ENCODE measurements at regions of chr19 and their contacts with region 1.

Region 1: GRCh38 chr19:17475541-17476115 is 5.3 kb downstream of the SLC27A1 start:
- DNase-seq: peak; percentile 65 to 83
- ATAC-seq: peak; percentile 94
- H3K4me3 ChIP-seq: peak overlapping the region in 3 of 4 donors; percentile 10 to 15 (median 10)
- H3K27ac ChIP-seq: peak overlapping the region; percentile 92 to 100 (median 96)
- H3K4me1 ChIP-seq: peaks cover 31 to 32% of the 10 kb centered on the region in 2 donors
- H3K27me3 ChIP-seq: no peaks in the 10 kb centered on the region
- CTCF ChIP-seq: no peak
- POLR2A ChIP-seq: peak; percentile 29 to 43

Region 2: DNA sequence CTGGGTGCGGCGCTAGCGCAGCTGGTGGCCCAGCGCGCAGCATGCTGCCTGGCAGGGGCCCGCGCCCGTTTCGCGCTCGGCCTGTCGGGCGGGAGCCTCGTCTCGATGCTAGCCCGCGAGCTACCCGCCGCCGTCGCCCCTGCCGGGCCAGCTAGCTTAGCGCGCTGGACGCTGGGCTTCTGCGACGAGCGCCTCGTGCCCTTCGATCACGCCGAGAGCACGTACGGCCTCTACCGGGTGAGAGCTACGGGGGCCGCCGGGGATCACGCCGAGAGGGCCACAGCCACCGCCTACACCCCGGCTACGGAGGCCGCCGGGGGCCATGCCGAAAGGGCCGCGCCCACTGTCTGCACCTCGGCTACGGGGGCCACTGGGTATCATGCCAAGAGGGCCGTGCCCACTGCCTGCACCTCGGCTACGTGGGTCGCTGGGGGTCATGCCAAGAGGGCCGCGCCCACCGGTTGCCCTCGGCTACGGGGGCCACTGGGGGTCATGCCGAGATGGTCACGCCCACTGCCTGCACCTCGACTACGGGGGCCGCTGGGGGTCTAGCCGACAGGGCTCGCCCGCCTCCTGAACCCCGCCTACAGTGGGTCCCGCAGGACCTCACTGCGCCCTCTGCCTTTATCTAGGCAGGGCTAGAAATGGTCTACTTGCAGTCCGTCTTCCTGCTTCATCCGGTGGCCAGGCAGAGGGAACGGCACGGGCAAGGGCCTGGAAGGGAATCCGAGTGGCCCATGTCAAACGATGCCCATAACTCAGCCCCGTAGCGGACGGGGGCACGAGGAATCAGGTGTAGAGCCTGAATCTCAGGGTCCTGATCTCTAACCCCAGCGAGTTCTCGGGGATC is 36.3 kb after region 1 on chr19:
- in situ Hi-C with region 1: no loop called
- intact Hi-C with region 1: loop called (anchors 2 kb)
- DNase-seq: peak; percentile 80 to 86
- ATAC-seq: peak; percentile 68 to 72
- H3K4me3 ChIP-seq: peak overlapping the region; percentile 75 to 100 (median 84)
- H3K27ac ChIP-seq: peak overlapping the region; percentile 90 to 100 (median 96)
- H3K4me1 ChIP-seq: peaks cover 22 to 27% of the 10 kb centered on the region in 2 donors
- H3K27me3 ChIP-seq: no peaks in the 10 kb centered on the region
- CTCF ChIP-seq: peak in 3 of 5 experiments; percentile 33 to 78 (median 72)
- POLR2A ChIP-seq: peak; percentile 76 to 82

Region 3: DNA sequence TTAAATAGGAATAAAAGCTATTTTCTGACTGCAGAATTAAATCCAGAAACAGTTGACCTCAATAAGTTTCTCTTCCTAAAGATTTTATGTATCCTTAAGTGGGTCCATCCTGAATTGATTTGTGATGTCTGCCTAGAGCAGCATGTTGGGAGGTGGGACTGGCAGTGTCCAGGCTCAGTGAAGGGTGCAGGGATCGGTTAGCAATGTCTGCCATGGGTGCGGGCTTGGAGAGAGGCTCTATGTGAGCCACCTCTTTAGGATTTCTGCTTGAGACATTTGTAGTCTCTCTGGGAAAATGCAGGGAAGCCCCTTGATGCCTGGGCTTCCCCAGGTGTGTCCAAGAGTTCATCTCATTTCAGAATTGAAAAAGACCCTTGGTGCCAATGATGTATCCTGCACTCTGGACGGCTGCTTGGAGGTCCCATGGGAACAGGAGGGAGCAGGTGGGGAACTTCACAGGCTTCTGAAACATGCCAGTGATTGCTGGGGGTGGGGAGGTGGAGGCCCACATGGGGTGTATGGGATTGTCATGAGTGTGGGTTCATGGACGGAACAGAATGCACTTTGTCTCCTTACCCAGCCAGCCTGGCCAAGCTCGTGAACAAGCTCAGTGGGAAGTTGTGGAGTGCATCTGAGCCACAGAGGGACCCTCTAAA is 73.6 kb after region 1 on chr19:
- in situ Hi-C with region 1: no loop called
- intact Hi-C with region 1: no loop called
- DNase-seq: no peak
- ATAC-seq: no peak
- H3K4me3 ChIP-seq: no peak overlapping the region
- H3K27ac ChIP-seq: no peak overlapping the region
- H3K4me1 ChIP-seq: peaks cover 0 to 7% of the 10 kb centered on the region in 2 donors
- H3K27me3 ChIP-seq: no peaks in the 10 kb centered on the region
- CTCF ChIP-seq: no peak
- POLR2A ChIP-seq: no peak

Measured in gastrocnemius medialis (tissue), 4 donors.